ENCODE measurements at regions of chr2 and their contacts with region 1.

Region 1: GRCh38 chr2:142734770-142735169 is 142.7 kb upstream of the KYNU start:
- DNase-seq: no peak
- H3K4me3 ChIP-seq: no peak overlapping the region
- H3K27ac ChIP-seq: no peak overlapping the region
- H3K4me1 ChIP-seq: no peaks in the 10 kb centered on the region
- H3K27me3 ChIP-seq: no peaks in the 10 kb centered on the region
- CTCF ChIP-seq: no peak
- EP300 ChIP-seq: no peak
- POLR2A ChIP-seq: no peak

Region 2: DNA sequence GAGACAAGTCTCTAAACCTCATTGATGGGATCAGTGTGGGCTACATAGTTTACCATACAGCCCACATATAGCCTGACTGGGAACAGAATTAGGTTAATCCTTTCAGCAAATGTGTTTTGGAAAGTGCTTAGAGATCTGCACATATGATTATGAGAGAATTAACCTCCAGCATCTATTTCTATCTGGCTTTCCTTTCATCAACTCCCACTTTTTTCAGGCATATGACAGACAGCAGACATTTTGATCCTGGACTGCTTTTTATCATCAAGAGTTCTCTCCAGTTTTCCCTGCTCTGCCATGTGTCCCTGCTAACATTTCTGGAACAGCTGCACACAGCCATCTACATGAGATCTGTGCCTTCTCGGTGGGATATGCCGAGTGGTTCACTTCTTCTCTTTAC is 464.5 kb before region 1 on chr2:
- intact Hi-C with region 1: loop called in 1 of 4 experiments (anchors 5 kb)
- DNase-seq: no peak
- H3K4me3 ChIP-seq: no peak overlapping the region
- H3K27ac ChIP-seq: no peak overlapping the region
- H3K4me1 ChIP-seq: no peaks in the 10 kb centered on the region
- H3K27me3 ChIP-seq: no peaks in the 10 kb centered on the region
- CTCF ChIP-seq: no peak
- EP300 ChIP-seq: no peak
- POLR2A ChIP-seq: no peak

Region 3: GRCh38 chr2:142557391-142557790 is 177.4 kb before region 1 on chr2:
- intact Hi-C with region 1: no loop called
- DNase-seq: no peak
- H3K4me3 ChIP-seq: no peak overlapping the region
- H3K27ac ChIP-seq: no peak overlapping the region
- H3K4me1 ChIP-seq: no peaks in the 10 kb centered on the region
- H3K27me3 ChIP-seq: no peaks in the 10 kb centered on the region
- CTCF ChIP-seq: no peak
- EP300 ChIP-seq: no peak
- POLR2A ChIP-seq: no peak

Region 4: DNA sequence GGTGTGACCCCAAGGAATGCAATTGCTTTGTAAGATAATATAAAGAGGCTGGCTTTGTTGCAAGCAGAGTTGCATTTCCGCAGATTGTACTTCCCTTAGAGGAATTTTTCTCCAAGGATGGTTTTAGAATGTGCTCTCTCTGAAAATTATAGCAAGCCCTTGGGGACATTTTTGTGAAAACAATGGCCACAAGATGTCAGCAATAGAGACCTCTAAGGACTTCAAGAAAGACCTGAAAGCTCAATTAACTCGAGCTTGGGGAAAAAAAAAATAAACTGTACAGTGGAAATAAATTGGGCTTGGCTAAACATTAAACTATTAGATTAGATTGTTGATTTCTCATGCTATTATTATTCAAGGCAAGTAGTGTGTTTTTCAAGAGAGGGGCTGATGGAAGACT is 61.4 kb after region 1 on chr2:
- intact Hi-C with region 1: no loop called
- DNase-seq: no peak
- H3K4me3 ChIP-seq: no peak overlapping the region
- H3K27ac ChIP-seq: no peak overlapping the region
- H3K4me1 ChIP-seq: no peaks in the 10 kb centered on the region
- H3K27me3 ChIP-seq: no peaks in the 10 kb centered on the region
- CTCF ChIP-seq: no peak
- EP300 ChIP-seq: no peak
- POLR2A ChIP-seq: no peak

Region 5: GRCh38 chr2:144143294-144144151 is 1408.8 kb after region 1 on chr2:
- intact Hi-C with region 1: no loop called
- DNase-seq: no peak
- H3K4me3 ChIP-seq: no peak overlapping the region
- H3K27ac ChIP-seq: no peak overlapping the region
- H3K4me1 ChIP-seq: no peaks in the 10 kb centered on the region
- H3K27me3 ChIP-seq: no peaks in the 10 kb centered on the region
- CTCF ChIP-seq: no peak
- EP300 ChIP-seq: no peak
- POLR2A ChIP-seq: no peak